ENCODE measurements at regions of chr13 and their contacts with region 1.

Region 1: GRCh38 chr13:52599848-52600603 is 42.2 kb upstream of the HNRNPA1L2 start:
- DNase-seq: no peak
- H3K4me3 ChIP-seq: peak overlapping the region; percentile 64
- CTCF ChIP-seq: no peak

Region 2: GRCh38 chr13:52617070-52618060 is 17.3 kb after region 1 on chr13:
- CTCF ChIA-PET with region 1: no interaction called
- POLR2A ChIA-PET with region 1: interaction called, 10 read pairs
- DNase-seq: peak; percentile 26
- H3K4me3 ChIP-seq: peak overlapping the region; percentile 95
- CTCF ChIP-seq: no peak

Measured in AG04449 (cell line).